Activated B cell treated with CpG ODN at 0.5 μM for 24 hours (primary cell): ENCODE measurements at regions of chr6 and their contacts with region 1.

Region 1: GRCh38 chr6:35731736-35732532 is 4.9 kb upstream of the ARMC12 start:
- DNase-seq: peak; percentile 93
- ATAC-seq: peak; percentile 69
- H3K4me3 Mint-ChIP-seq: peak overlapping the region; percentile 90
- H3K27ac Mint-ChIP-seq: peak overlapping the region; percentile 93
- H3K4me1 Mint-ChIP-seq: peaks cover 62% of the 10 kb centered on the region
- H3K27me3 Mint-ChIP-seq: no peaks in the 10 kb centered on the region
- CTCF ChIP-seq: no peak

Region 2: GRCh38 chr6:35452186-35453090 is 279.5 kb before region 1 on chr6 and contains the start of gene FANCE:
- CTCF ChIA-PET with region 1: interaction called, 3 read pairs
- POLR2A ChIA-PET with region 1: no interaction called
- intact Hi-C with region 1: loop called (anchors 1 kb)
- DNase-seq: peak; percentile 97
- ATAC-seq: peak; percentile 90
- H3K4me3 Mint-ChIP-seq: peak within 1 kb of the TSS; percentile 86
- H3K27ac Mint-ChIP-seq: peak within 1 kb of the TSS; percentile 5
- H3K4me1 Mint-ChIP-seq: peaks cover 27% of the 10 kb centered on the region
- H3K27me3 Mint-ChIP-seq: no peaks in the 10 kb centered on the region
- CTCF ChIP-seq: no peak
- total RNA-seq, gene FANCE: 8.5 and 9.2 TPM in 2 replicates

Region 3: DNA sequence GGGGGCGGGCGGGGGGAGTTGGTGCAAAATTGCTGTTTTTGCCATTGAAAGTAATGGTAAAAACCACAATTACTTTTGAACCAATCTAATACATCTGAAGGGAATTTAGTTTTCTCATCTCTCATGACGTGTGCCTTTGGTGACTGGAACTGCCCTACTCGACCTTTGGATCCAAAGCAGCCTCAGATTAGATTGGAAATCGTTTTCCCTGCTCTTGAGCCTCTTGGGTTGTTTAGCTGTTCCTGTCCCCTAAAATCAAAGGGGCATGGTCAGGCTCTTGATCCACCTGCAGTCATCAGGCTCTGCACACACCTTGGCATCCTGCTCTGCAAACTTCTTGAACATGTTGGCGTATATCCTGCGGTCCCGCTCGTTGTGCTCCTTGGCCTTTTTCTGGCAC is 155.3 kb before region 1 on chr6:
- CTCF ChIA-PET with region 1: interaction called, 177 read pairs
- POLR2A ChIA-PET with region 1: no interaction called
- intact Hi-C with region 1: no loop called
- DNase-seq: no peak
- ATAC-seq: no peak
- H3K4me3 Mint-ChIP-seq: no peak overlapping the region
- H3K27ac Mint-ChIP-seq: no peak overlapping the region
- H3K4me1 Mint-ChIP-seq: no peaks in the 10 kb centered on the region
- H3K27me3 Mint-ChIP-seq: no peaks in the 10 kb centered on the region
- CTCF ChIP-seq: no peak

Region 4: DNA sequence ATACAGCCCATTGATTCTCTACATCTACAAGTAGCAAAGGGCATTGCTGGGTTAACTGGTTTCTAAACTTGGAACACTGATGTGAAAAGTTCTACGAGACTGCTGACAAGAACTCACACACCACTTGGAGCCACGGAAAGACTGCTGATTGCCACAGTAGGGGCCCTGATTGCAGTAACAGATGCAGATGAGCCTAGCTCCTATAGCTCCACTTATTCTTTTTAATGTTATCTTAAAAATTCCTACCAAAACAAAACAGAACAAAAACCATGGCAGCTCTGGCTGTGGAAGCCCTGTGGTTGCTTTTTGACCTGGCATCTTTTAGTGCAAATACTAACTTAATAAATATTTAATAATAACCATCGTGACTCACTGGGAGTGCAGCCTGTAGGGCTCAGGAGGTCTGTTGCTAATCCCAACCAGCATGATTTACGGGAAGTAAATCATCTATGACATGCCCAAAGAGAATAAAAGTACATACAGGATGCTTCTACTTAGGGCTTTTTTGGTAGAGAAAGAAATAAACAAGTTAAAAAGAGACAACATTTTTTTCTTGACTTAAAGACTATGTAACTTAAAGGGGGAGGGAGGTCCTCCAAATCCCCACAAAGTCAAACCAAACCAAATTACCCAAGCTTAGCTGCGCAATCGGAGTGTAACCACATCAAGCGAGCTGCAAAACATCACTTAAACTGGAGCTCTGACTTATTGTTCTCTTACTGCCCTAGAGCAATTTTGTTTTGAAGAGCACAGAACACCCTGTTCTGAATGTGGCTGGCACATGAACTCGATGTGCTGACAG is 130.4 kb before region 1 on chr6:
- CTCF ChIA-PET with region 1: interaction called, 16 read pairs
- POLR2A ChIA-PET with region 1: interaction called, 4 read pairs
- intact Hi-C with region 1: loop called (anchors 5 kb)
- DNase-seq: no peak
- ATAC-seq: no peak
- H3K4me3 Mint-ChIP-seq: no peak overlapping the region
- H3K27ac Mint-ChIP-seq: peak overlapping the region; percentile 37
- H3K4me1 Mint-ChIP-seq: peaks cover 40% of the 10 kb centered on the region
- H3K27me3 Mint-ChIP-seq: no peaks in the 10 kb centered on the region
- CTCF ChIP-seq: no peak

Region 5: DNA sequence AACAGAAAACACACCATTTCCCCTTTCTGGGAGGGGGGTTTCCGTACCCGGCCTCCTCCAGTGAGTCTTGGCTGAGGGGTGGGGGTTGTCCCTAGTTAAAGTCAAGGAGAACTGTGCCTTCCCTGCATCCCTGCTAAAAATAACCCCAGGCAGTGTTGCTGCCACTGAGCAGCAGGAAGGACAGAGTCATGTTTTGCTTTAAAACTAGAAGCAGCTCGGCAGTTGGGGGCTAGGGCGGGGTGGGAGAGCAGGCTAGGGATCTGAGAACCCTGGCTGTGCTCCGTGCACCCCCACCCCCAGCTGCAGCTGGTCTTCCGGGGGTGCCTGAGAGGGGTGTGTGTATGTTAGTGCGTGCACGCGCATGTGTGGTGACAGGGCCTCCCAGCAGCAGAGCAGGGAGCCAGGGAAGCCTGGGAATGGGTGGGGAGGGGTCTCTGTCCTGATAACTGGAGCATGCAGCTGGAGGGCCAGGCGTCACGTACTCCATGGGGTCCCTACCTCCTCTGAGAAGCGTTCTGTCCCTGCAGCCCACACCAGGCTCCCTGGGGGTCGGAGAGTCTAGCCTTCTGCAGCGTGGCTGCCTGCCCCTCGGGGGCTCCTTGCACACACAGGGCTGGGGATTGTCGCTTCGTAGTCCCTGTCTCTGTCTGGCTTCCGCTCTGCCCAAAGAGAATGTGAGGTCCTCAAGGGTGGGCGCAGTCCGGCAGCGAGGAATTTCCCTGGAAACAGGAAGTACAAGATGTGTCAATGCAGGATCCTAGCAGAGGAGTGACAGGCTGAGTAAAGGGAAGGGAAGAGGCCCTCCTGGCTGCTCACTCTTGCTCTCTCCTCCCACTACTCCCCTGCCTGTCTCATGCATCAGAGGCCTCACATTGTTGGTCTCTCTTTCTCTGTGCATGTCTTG is 11.9 kb before region 1 on chr6:
- CTCF ChIA-PET with region 1: interaction called, 7 read pairs
- POLR2A ChIA-PET with region 1: interaction called, 31 read pairs
- intact Hi-C with region 1: loop called (anchors 1 kb)
- DNase-seq: peak; percentile 44
- ATAC-seq: peak; percentile 78
- H3K4me3 Mint-ChIP-seq: peak overlapping the region; percentile 75
- H3K27ac Mint-ChIP-seq: peak overlapping the region; percentile 89
- H3K4me1 Mint-ChIP-seq: peaks cover 48% of the 10 kb centered on the region
- H3K27me3 Mint-ChIP-seq: no peaks in the 10 kb centered on the region
- CTCF ChIP-seq: no peak